Mammary epithelial cell (primary cell): ENCODE measurements at regions of chr5 and their contacts with region 1.

Region 1: DNA sequence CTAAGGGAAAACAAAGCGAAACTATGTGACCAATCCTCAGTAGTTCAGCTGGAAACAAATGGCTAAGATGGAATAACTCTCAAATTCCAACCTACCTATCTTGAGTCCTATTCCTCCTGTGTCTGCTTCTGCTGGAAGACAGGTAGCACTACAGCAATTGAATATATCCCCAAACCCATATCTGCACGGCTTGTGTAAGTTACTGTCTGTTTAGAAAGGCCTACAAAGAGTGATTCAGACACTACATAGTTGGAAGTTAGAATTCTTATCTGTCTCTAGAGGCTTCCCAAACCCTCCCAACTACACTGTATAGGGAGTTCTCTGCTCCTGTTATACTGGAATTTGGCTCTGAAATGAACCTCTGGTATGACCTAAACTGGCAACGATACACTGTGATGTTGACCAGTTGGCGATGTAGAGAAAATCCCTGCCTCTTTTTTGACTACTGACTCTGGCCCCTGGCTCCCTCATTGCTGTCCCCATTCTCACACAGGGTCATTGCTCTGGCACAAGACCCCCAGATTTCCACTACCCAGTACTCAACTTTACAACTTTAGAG is 22.6 kb upstream of the NADK2 start:
- DNase-seq: no peak
- H3K4me3 ChIP-seq: no peak overlapping the region
- H3K27ac ChIP-seq: no peak overlapping the region
- H3K4me1 ChIP-seq: peaks cover 3% of the 10 kb centered on the region
- H3K27me3 ChIP-seq: no peaks in the 10 kb centered on the region
- CTCF ChIP-seq: no peak

Region 2: DNA sequence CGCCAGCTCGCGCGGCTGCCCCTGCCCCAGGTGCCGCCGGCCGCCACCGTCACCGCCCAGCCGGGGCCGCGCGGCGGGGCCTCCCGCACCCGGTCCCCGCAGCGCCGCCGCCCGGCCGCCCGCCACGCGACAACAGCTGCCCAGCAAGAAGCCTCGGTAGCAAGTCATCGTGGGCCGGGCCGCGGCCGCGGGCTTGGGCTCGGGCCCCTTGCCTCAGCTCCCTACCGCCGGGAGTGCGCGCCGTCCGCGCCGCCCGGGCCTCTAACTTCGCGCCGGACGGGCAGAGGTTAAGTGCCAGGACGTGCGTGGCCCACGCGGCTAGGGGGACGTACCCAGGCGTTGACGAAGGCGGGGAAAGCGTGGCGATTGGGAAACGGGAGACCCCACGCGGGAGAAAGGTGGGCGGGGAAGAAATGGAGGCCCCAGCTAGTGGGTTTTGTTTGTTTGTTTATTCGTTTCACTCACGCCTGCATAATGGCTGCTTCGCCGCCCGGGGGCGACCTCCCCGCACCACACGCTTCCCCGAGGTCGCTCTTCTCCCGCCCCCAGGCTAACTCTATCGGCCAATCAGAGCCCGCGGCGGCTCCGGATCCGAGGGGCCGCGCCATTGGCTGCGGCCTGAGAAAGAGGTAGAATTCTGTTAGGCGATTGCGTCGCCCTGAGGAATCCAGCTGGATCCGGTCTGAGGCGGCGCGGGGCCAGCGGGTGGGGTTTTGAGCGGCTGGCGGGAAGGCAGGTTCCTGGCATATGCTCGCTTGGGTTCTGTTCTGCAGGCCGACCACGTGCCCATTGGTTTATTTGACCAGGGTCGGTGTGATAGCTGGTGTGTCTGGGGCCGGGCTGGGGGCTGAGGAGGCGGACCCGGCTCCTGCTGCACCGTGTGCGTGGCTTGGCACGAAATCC is 22.4 kb before region 1 on chr5 and contains the start of gene NADK2:
- CTCF ChIA-PET with region 1: no interaction called
- dilution Hi-C with region 1: no loop called
- in situ Hi-C with region 1: no loop called
- intact Hi-C with region 1: no loop called
- DNase-seq: peak; percentile 92
- H3K4me3 ChIP-seq: peak within 1 kb of the TSS; percentile 86 to 88 (median 86)
- H3K27ac ChIP-seq: peak within 1 kb of the TSS; percentile 82
- H3K4me1 ChIP-seq: peaks cover 18% of the 10 kb centered on the region
- H3K27me3 ChIP-seq: no peaks in the 10 kb centered on the region
- CTCF ChIP-seq: peak; percentile 23 to 52
- total RNA-seq, gene NADK2: 18.5 to 21.1 TPM

Region 3: DNA sequence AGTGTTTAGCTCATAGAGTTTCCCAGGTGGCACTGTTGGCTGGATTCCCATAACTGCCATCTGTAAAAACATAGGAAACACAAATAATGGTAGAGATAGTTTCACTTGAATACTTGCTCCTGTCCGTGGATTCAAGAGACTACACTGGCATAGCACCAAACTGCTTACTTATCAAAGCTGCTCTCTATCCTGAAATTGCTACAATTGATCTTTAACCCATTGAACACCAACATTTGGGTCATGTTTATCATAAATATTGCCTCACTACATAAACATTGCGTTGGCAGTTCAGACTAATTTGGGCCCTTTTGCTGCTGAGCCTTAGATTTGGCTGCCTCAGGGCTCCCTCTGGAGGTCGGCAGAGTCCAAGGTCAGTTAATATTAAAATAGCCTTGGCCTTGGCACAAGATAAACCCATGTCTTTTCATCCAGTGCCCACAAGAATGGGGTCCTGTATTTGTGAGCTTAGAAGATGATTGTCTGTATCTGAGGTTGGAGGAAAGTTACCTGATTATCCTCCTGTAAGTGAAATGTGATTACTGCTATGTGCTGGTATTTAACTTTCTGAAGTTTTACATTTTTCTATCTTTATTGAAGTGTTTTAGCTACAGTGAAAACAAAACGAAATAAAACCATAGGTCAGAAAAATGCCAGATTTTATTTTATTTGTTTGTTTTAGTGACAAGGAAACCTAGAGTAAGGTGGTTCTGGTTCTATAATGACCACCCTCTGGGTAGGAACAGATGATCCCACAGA is 41.5 kb after region 1 on chr5:
- CTCF ChIA-PET with region 1: no interaction called
- dilution Hi-C with region 1: no loop called
- in situ Hi-C with region 1: no loop called
- intact Hi-C with region 1: loop called (anchors 1 kb)
- DNase-seq: peak; percentile 18
- H3K4me3 ChIP-seq: no peak overlapping the region
- H3K27ac ChIP-seq: no peak overlapping the region
- H3K4me1 ChIP-seq: peaks cover 4% of the 10 kb centered on the region
- H3K27me3 ChIP-seq: peaks cover 6% of the 10 kb centered on the region
- CTCF ChIP-seq: peak; percentile 50 to 75

Region 4: DNA sequence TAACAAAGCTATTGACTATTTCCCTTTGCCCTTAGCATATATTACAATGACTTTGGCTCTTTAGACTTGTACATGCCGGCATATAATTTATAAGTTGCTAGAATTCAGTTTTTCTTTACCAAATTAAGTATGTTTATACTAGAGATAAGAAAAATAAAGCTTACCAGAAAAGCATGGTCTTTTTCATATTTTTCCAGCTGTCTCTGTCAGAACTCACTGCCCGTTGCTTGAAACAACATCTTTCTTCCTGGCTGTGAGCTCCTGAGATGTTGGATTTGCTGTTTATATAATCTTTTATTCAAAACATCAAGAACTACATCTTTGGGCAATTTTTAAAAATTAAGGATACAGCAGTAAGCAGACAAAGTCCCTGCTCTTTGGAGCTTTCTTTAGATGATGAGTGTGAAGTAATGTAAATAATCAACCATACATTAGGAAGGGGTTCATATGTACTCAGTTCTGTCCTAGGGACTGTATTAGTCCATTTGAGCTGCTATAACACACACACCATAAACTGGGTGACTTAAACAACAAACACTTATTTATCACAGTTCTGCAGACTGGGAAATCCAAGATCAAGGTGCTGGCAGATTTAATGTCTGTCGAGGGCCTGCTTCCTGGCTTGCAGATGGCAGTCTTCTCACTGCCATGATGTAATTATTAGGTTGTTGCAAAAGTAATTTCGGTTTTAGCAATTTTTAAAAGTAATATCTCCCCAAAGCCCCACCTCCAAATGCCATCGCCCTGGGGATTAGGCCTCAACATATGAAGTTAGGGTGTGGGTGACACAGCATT is 82.8 kb after region 1 on chr5:
- CTCF ChIA-PET with region 1: no interaction called
- dilution Hi-C with region 1: no loop called
- in situ Hi-C with region 1: no loop called
- intact Hi-C with region 1: no loop called
- DNase-seq: no peak
- H3K4me3 ChIP-seq: no peak overlapping the region
- H3K27ac ChIP-seq: no peak overlapping the region
- H3K4me1 ChIP-seq: no peaks in the 10 kb centered on the region
- H3K27me3 ChIP-seq: peaks cover 4% of the 10 kb centered on the region
- CTCF ChIP-seq: no peak

Region 5: GRCh38 chr5:36507332-36507952 is 243.2 kb after region 1 on chr5:
- CTCF ChIA-PET with region 1: no interaction called
- dilution Hi-C with region 1: no loop called
- in situ Hi-C with region 1: no loop called
- intact Hi-C with region 1: loop called (anchors 10 kb)
- DNase-seq: peak; percentile 42
- H3K4me3 ChIP-seq: no peak overlapping the region
- H3K27ac ChIP-seq: no peak overlapping the region
- H3K4me1 ChIP-seq: peaks cover 12% of the 10 kb centered on the region
- H3K27me3 ChIP-seq: no peaks in the 10 kb centered on the region
- CTCF ChIP-seq: peak; percentile 79 to 86

Region 6: GRCh38 chr5:36695677-36696673 is 431.7 kb after region 1 on chr5:
- CTCF ChIA-PET with region 1: no interaction called
- dilution Hi-C with region 1: no loop called
- in situ Hi-C with region 1: loop called (anchors 10 kb)
- intact Hi-C with region 1: loop called (anchors 1 kb)
- DNase-seq: peak; percentile 61
- H3K4me3 ChIP-seq: no peak overlapping the region
- H3K27ac ChIP-seq: no peak overlapping the region
- H3K4me1 ChIP-seq: peaks cover 9% of the 10 kb centered on the region
- H3K27me3 ChIP-seq: no peaks in the 10 kb centered on the region
- CTCF ChIP-seq: peak; percentile 80 to 90